ENCODE measurements at regions of chr7 and their contacts with region 1.

Region 1: GRCh38 chr7:41425926-41426325 is 277.0 kb downstream of the INHBA start:
- DNase-seq: no peak
- H3K4me3 ChIP-seq: no peak overlapping the region
- H3K27ac ChIP-seq: no peak overlapping the region
- H3K4me1 ChIP-seq: no peaks in the 10 kb centered on the region
- H3K27me3 ChIP-seq: no peaks in the 10 kb centered on the region
- CTCF ChIP-seq: no peak
- EP300 ChIP-seq: no peak
- POLR2A ChIP-seq: no peak

Region 2: DNA sequence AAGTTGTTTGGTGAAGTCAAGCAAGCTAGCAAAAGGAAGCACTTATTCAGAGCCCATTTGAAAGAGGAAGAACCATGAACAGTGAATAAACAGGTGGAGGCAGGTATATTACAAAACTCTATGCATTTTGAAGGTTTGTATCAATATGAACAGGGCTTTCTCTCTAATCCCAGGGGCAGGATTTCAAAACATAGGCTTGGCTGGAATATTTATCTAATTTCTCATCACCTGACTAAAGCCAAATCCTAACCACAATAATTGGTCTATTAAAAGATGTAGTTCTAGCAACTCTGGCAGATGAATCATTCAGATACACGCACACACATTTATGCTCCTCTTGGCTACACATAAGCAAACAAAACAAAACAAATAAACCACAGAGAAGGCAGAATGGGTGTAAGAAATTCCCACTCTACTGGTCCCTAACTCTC is 277.4 kb before region 1 on chr7:
- intact Hi-C with region 1: loop called in 1 of 4 experiments (anchors 10 kb)
- DNase-seq: no peak
- H3K4me3 ChIP-seq: no peak overlapping the region
- H3K27ac ChIP-seq: no peak overlapping the region
- H3K4me1 ChIP-seq: no peaks in the 10 kb centered on the region
- H3K27me3 ChIP-seq: no peaks in the 10 kb centered on the region
- CTCF ChIP-seq: no peak
- EP300 ChIP-seq: no peak
- POLR2A ChIP-seq: no peak

Region 3: GRCh38 chr7:41612798-41613197 is 186.9 kb after region 1 on chr7:
- intact Hi-C with region 1: no loop called
- DNase-seq: no peak
- H3K4me3 ChIP-seq: no peak overlapping the region
- H3K27ac ChIP-seq: no peak overlapping the region
- H3K4me1 ChIP-seq: no peaks in the 10 kb centered on the region
- H3K27me3 ChIP-seq: no peaks in the 10 kb centered on the region
- CTCF ChIP-seq: no peak
- EP300 ChIP-seq: no peak
- POLR2A ChIP-seq: no peak